ENCODE measurements at regions of chr16 and their contacts with region 1.

Region 1: GRCh38 chr16:30557957-30558788 is at the start of gene ZNF764:
- DNase-seq: peak; percentile 99
- H3K4me3 ChIP-seq: peak within 1 kb of the TSS; percentile 80 to 81
- H3K27ac ChIP-seq: peak within 1 kb of the TSS; percentile 93
- H3K4me1 ChIP-seq: no peaks in the 10 kb centered on the region
- H3K27me3 ChIP-seq: no peaks in the 10 kb centered on the region
- CTCF ChIP-seq: peak in 1 of 4 experiments; percentile 25
- POLR2A ChIP-seq: peak; percentile 51
- total RNA-seq, gene ZNF764: 15.7 to 22.5 TPM

Region 2: GRCh38 chr16:30534368-30535105 is 23.6 kb before region 1 on chr16 and contains the start of gene ZNF747:
- intact Hi-C with region 1: loop called (anchors 2 kb)
- DNase-seq: peak; percentile 89
- H3K4me3 ChIP-seq: peak within 1 kb of the TSS; percentile 51 to 57
- H3K27ac ChIP-seq: peak within 1 kb of the TSS; percentile 90 to 94
- H3K4me1 ChIP-seq: peaks cover 10% of the 10 kb centered on the region
- H3K27me3 ChIP-seq: no peaks in the 10 kb centered on the region
- CTCF ChIP-seq: peak in 1 of 4 experiments; percentile 23
- POLR2A ChIP-seq: peak; percentile 61
- total RNA-seq, gene ZNF747: 15.8 to 22.6 TPM

Measured in prostate gland (tissue), 2 donors.